Aorta (tissue), 5 donors: ENCODE measurements at regions of chr4 and their contacts with region 1.

Region 1: DNA sequence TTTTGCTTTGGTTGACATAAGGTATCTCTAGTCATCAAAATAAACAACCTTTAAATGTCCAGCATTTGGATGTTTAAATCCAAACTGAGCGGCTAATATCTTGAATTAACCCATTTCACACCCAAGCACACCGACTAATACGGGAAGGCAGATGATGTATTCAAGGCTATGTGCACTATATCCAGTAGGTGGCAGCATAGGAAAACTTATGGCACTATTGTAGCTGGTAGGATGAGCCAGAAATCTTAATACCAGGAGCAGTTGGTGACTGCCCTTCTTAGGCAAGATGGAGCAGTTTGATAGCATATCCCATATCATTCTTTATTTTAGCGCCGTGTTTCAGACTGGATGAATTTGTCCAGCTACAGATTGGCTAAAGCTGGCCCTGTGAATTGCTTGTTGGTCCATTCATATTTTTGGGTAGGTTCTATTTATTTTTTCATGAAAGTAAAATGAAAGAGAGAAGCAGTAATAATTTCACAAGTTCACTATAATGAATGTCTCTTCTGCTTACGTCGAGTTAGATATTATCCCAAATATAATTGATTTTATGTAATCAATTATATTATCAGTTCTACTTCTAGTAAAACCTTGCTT is 24.4 kb downstream of the UCHL1 start:
- DNase-seq: no peak
- ATAC-seq: peak; percentile 94
- H3K4me3 ChIP-seq: peak overlapping the region in 1 of 2 donors; percentile 31
- H3K27ac ChIP-seq: no peak overlapping the region
- H3K4me1 ChIP-seq: no peaks in the 10 kb centered on the region
- H3K27me3 ChIP-seq: no peaks in the 10 kb centered on the region

Region 2: DNA sequence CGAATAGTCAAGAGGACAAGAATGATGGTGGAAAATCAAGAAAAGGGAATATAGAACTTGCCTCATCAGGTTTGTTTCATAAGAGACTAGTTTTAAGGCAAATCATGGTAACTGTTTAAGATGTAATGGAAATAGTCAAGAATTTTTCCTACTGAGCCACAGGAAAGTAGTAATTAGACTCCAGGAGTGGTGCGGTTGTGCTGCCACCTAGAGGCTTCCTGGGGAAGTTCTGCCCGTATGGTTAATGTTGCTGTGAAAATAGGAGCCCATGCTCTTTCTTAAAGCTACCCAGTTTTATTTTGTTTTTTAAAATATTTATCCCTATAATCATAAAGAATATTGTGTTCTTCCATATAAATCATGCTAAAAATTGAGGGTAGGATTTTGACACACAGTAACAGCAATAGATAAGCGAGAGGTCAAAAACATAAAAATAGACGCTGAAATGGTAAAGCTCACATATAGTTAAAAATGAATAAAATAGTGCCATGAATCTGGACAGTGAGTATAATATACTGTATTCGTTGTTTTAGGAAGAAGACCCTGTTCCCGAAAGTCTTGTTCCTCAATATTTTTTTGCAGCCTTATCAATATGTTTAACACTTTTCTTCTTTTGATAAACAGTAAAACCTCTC is 380.4 kb after region 1 on chr4:
- intact Hi-C with region 1: loop called (anchors 1 to 5 kb)
- DNase-seq: peak; percentile 60 to 86
- ATAC-seq: peak; percentile 84
- H3K4me3 ChIP-seq: no peak overlapping the region
- H3K27ac ChIP-seq: no peak overlapping the region
- H3K4me1 ChIP-seq: peaks cover 0 to 2% of the 10 kb centered on the region in 2 donors
- H3K27me3 ChIP-seq: no peaks in the 10 kb centered on the region

Region 3: GRCh38 chr4:41882625-41883347 is 601.6 kb after region 1 on chr4:
- intact Hi-C with region 1: loop called in 1 of 2 experiments (anchors 2 kb)
- DNase-seq: peak in 1 of 2 donors; percentile 84
- ATAC-seq: peak; percentile 84
- H3K4me3 ChIP-seq: peak overlapping the region; percentile 2 to 56
- H3K27ac ChIP-seq: no peak overlapping the region
- H3K4me1 ChIP-seq: no peaks in the 10 kb centered on the region
- H3K27me3 ChIP-seq: no peaks in the 10 kb centered on the region

Region 4: GRCh38 chr4:41887821-41888686 is 606.9 kb after region 1 on chr4:
- intact Hi-C with region 1: loop called (anchors 2 kb)
- DNase-seq: no peak
- ATAC-seq: no peak
- H3K4me3 ChIP-seq: no peak overlapping the region
- H3K27ac ChIP-seq: no peak overlapping the region
- H3K4me1 ChIP-seq: no peaks in the 10 kb centered on the region
- H3K27me3 ChIP-seq: no peaks in the 10 kb centered on the region